B cell (primary cell): ENCODE measurements at regions of chr10 and their contacts with region 1.

Region 1: GRCh38 chr10:69004821-69005220 is 16.2 kb downstream of the KIFBP start:
- DNase-seq: peak; percentile 52
- ATAC-seq: no peak
- H3K4me3 ChIP-seq: no peak overlapping the region
- H3K4me3 Mint-ChIP-seq: no peak overlapping the region
- H3K27ac ChIP-seq: no peak overlapping the region
- H3K27ac Mint-ChIP-seq: no peak overlapping the region
- H3K4me1 ChIP-seq: no peaks in the 10 kb centered on the region
- H3K4me1 Mint-ChIP-seq: no peaks in the 10 kb centered on the region
- H3K27me3 ChIP-seq: no peaks in the 10 kb centered on the region
- H3K27me3 Mint-ChIP-seq: no peaks in the 10 kb centered on the region
- CTCF ChIP-seq: peak; percentile 72

Region 2: GRCh38 chr10:69222157-69223027 is 217.6 kb after region 1 on chr10:
- CTCF ChIA-PET with region 1: no interaction called
- POLR2A ChIA-PET with region 1: no interaction called
- intact Hi-C with region 1: loop called (anchors 1 kb)
- DNase-seq: peak; percentile 60
- ATAC-seq: peak; percentile 85
- H3K4me3 ChIP-seq: peak overlapping the region in 1 of 5 experiments; percentile 15
- H3K4me3 Mint-ChIP-seq: peak overlapping the region; percentile 53
- H3K27ac ChIP-seq: no peak overlapping the region
- H3K27ac Mint-ChIP-seq: peak overlapping the region; percentile 75
- H3K4me1 ChIP-seq: peaks cover 20 to 29% of the 10 kb centered on the region in 2 donors
- H3K4me1 Mint-ChIP-seq: peaks cover 26% of the 10 kb centered on the region
- H3K27me3 ChIP-seq: no peaks in the 10 kb centered on the region
- H3K27me3 Mint-ChIP-seq: no peaks in the 10 kb centered on the region
- CTCF ChIP-seq: peak; percentile 79